ENCODE measurements at regions of chr19 and their contacts with region 1.

Region 1: GRCh38 chr19:16897154-16897855 is 8.5 kb downstream of the F2RL3 start:
- DNase-seq: peak; percentile 55
- H3K4me3 Mint-ChIP-seq: peak overlapping the region; percentile 73
- H3K27ac Mint-ChIP-seq: peak overlapping the region; percentile 55
- H3K4me1 Mint-ChIP-seq: peaks cover 17% of the 10 kb centered on the region
- H3K27me3 Mint-ChIP-seq: peaks cover 22% of the 10 kb centered on the region

Region 2: GRCh38 chr19:16771618-16772017 is 125.7 kb before region 1 on chr19:
- intact Hi-C with region 1: loop called (anchors 1 kb)
- DNase-seq: peak; percentile 54
- H3K4me3 Mint-ChIP-seq: no peak overlapping the region
- H3K27ac Mint-ChIP-seq: no peak overlapping the region
- H3K4me1 Mint-ChIP-seq: no peaks in the 10 kb centered on the region
- H3K27me3 Mint-ChIP-seq: no peaks in the 10 kb centered on the region

Region 3: GRCh38 chr19:16778796-16779411 is 118.4 kb before region 1 on chr19:
- intact Hi-C with region 1: loop called (anchors 2 kb)
- DNase-seq: peak; percentile 7
- H3K4me3 Mint-ChIP-seq: no peak overlapping the region
- H3K27ac Mint-ChIP-seq: no peak overlapping the region
- H3K4me1 Mint-ChIP-seq: no peaks in the 10 kb centered on the region
- H3K27me3 Mint-ChIP-seq: no peaks in the 10 kb centered on the region

Region 4: DNA sequence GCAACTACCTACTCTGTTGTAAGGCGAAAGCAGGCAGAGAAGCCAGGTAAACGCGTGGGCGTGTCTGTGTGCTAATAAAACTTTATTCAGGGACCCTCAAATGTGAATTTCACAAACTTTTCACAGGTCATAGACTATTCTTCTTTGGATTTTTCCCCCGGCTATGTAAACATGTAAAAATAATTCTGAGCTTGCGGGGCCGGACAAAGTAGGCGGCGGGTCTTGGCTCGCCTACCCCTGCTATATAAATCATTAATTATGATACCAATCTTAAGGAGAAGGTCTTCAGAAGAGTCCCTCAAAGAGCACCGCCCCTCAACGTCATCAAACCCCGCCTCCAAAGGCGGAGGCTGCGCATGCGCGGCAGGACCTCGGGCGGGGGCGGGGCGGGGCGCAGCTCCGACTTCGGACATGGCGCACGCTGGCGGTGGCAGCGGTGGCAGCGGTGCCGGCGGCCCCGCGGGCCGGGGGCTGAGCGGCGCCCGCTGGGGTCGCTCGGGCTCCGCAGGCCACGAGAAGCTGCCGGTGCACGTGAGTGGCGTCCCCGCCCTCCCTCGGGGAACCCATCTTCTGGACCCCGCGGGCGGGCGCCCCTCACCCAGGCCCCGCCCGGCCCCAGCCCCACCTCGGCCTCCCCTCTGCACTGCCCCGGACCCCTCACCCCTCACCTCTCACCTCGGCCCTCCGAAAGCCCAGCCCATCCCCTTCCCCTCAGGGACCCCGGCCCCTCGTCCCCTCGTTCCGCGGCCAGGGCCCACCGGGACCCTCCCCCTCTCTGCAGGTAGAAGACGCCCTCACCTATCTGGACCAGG is 68.1 kb before region 1 on chr19 and contains the start of gene SIN3B:
- intact Hi-C with region 1: loop called (anchors 1 kb)
- DNase-seq: peak; percentile 88
- H3K4me3 Mint-ChIP-seq: peak within 1 kb of the TSS; percentile 88
- H3K27ac Mint-ChIP-seq: peak within 1 kb of the TSS; percentile 78
- H3K4me1 Mint-ChIP-seq: peaks cover 37% of the 10 kb centered on the region
- H3K27me3 Mint-ChIP-seq: peaks cover 26% of the 10 kb centered on the region
- total RNA-seq, gene SIN3B: 44.6 and 45.1 TPM in 2 replicates

Region 5: DNA sequence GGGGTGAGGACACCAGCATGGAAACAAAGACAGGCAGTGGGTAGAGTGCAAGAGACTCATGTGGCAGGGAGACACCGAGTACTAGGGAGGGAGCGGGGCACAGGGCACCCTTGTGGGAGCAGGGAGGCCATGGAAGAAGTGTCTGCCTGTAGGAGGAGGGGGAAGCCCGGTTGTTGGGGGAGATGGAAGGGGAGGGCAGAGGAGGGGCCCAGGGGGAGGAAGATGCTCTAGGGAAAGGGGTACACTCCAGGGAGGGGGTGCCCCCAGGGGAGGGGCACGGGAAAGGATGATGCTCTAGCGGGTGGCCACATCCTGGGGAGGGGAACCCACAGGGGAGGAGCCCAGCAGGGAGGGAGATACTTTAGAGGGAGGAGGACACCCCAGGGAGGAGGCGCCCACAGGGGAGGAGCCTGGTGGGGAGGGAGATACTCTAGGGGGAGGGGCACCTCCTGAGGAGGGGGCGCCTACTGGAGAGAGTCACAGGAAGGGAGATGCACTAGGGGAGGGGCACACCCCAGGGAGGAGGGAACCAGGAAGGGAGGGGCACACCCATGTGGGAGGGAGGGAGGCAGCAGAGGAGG is 104.4 kb after region 1 on chr19:
- intact Hi-C with region 1: loop called (anchors 1 kb)
- DNase-seq: peak; percentile 85
- H3K4me3 Mint-ChIP-seq: peak overlapping the region; percentile 56
- H3K27ac Mint-ChIP-seq: peak overlapping the region; percentile 61
- H3K4me1 Mint-ChIP-seq: peaks cover 20% of the 10 kb centered on the region
- H3K27me3 Mint-ChIP-seq: peaks cover 5% of the 10 kb centered on the region